HepG2 (cell line): ENCODE measurements at regions of chr7 and their contacts with region 1.

Region 1: DNA sequence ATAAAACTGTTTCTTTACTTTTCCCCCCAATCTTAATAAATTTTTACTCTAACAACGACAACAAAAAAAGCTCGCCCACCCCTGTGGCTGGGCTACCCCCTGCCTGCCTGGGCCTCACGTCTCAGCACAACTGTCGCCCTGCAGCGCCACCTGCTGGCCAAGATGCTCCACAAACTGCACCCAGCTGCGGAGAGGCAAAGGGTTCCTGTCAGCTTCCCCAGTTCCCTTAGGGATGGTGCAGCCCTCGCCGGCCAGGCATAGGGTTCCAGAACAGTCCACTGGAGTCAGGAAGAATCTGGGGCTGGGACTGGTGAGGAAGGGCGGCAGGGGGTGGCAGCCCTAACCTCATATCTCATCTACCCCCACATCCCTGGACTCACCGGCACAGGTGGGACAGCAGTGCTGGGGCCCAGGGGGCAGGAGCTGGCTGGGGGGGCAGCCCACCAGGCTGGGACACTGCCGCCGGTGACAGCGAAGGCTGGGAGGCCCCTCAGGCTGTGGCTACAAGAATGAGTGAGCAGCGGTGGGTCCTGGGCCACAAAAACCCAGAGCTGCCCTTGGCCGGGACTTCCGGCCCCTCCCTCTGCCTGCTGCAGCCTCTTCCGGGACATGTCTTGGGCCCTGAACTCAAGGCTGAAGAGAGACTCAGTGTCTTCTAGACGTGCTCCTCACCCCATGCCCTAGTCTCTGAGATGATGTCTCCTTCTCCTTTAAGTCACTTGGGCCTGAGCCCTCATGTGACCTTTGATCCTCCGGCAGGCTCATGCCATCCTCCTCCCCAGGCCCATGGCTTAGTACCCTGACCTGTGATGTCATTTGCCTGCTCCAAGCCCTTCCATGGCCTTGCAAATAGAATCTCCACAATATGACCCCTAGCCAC is 21.2 kb downstream of the ATP6V1F start:
- DNase-seq: peak; percentile 44
- ATAC-seq: peak; percentile 49
- H3K4me3 ChIP-seq: peak overlapping the region; percentile 70 to 79 (median 70)
- H3K27ac ChIP-seq: peak overlapping the region; percentile 21
- H3K4me1 ChIP-seq: peaks cover 39% of the 10 kb centered on the region
- H3K27me3 ChIP-seq: peaks cover 0 to 10% of the 10 kb centered on the region in 2 experiments; a peak in 2 of 5 replicates
- CTCF ChIP-seq: peak; percentile 96
- EP300 ChIP-seq: no peak
- POLR2A ChIP-seq: no peak
- RAD21 ChIP-seq: peak; percentile 65

Region 2: GRCh38 chr7:128791121-128791961 is 92.5 kb before region 1 on chr7:
- CTCF ChIA-PET with region 1: no interaction called
- POLR2A ChIA-PET with region 1: no interaction called
- in situ Hi-C with region 1: loop called (anchors 5 kb)
- intact Hi-C with region 1: loop called (anchors 2 kb)
- DNase-seq: no peak
- ATAC-seq: peak; percentile 82
- H3K4me3 ChIP-seq: peak overlapping the region; percentile 59 to 79 (median 65)
- H3K27ac ChIP-seq: no peak overlapping the region
- H3K4me1 ChIP-seq: peaks cover 17% of the 10 kb centered on the region
- H3K27me3 ChIP-seq: peaks cover 7 to 32% of the 10 kb centered on the region in 2 experiments; a peak in 4 of 5 replicates
- CTCF ChIP-seq: no peak
- EP300 ChIP-seq: no peak
- POLR2A ChIP-seq: no peak
- RAD21 ChIP-seq: no peak

Region 3: GRCh38 chr7:128821724-128822123 is 62.1 kb before region 1 on chr7:
- CTCF ChIA-PET with region 1: no interaction called
- POLR2A ChIA-PET with region 1: no interaction called
- in situ Hi-C with region 1: no loop called
- intact Hi-C with region 1: no loop called
- DNase-seq: no peak
- ATAC-seq: peak; percentile 30; the same call in 1 of the 3 replicates
- H3K4me3 ChIP-seq: no peak overlapping the region
- H3K27ac ChIP-seq: no peak overlapping the region
- H3K4me1 ChIP-seq: peaks cover 3% of the 10 kb centered on the region
- H3K27me3 ChIP-seq: peaks cover 2 to 41% of the 10 kb centered on the region in 2 experiments; a peak in 4 of 5 replicates
- CTCF ChIP-seq: no peak
- EP300 ChIP-seq: no peak
- POLR2A ChIP-seq: no peak
- RAD21 ChIP-seq: no peak

Region 4: DNA sequence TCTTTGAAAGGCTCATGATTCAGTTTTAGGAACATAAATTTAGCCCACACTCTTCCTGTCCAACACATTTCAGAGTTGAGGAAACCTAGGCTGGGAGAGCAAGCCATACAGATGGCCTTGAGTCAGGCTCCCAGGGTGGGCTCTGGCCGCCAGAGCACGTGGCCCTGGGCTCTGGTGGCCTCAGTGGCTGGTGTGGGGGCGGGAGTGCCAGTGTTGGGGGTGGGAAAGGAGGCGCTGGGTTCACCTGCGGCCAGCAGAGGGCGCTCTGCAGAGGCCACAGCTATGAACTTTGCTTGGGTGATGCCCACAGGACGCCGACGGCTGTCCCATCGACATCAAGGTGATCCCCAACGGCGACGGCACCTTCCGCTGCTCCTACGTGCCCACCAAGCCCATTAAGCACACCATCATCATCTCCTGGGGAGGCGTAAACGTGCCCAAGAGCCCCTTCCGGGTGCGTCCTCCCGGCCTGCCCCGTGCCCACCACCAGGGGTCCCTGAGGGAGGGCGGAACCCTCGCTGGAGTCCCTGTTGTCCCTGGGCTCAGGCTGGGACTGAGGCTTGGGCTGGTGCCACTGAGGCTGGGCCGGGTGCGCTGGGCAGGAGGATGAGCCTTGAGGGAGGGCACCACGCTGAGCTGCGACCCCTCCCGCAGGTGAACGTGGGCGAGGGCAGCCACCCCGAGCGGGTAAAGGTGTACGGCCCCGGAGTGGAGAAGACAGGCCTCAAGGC is 41.8 kb before region 1 on chr7:
- CTCF ChIA-PET with region 1: interaction called, 13 read pairs
- POLR2A ChIA-PET with region 1: no interaction called
- in situ Hi-C with region 1: no loop called
- intact Hi-C with region 1: no loop called
- DNase-seq: no peak
- ATAC-seq: peak; percentile 64
- H3K4me3 ChIP-seq: no peak overlapping the region; a peak in 1 of 6 replicates
- H3K27ac ChIP-seq: no peak overlapping the region
- H3K4me1 ChIP-seq: peaks cover 11% of the 10 kb centered on the region
- H3K27me3 ChIP-seq: peaks cover 5 to 15% of the 10 kb centered on the region in 2 experiments; a peak in 2 of 5 replicates
- CTCF ChIP-seq: peak; percentile 68
- EP300 ChIP-seq: no peak
- POLR2A ChIP-seq: no peak
- RAD21 ChIP-seq: 0 out of 2 replicates have a peak, but pooled peaks have one; percentile 40

Region 5: GRCh38 chr7:128862571-128863432 is 21.1 kb before region 1 on chr7 and contains the start of gene ATP6V1F:
- CTCF ChIA-PET with region 1: no interaction called
- POLR2A ChIA-PET with region 1: interaction called, 12 read pairs
- in situ Hi-C with region 1: no loop called
- intact Hi-C with region 1: loop called (anchors 1 kb)
- DNase-seq: peak; percentile 93
- ATAC-seq: peak; percentile 89
- H3K4me3 ChIP-seq: peak within 1 kb of the TSS; percentile 72 to 91 (median 81)
- H3K27ac ChIP-seq: peak within 1 kb of the TSS; percentile 39
- H3K4me1 ChIP-seq: peaks cover 22% of the 10 kb centered on the region
- H3K27me3 ChIP-seq: peaks cover 0 to 10% of the 10 kb centered on the region in 2 experiments; a peak in 4 of 5 replicates
- CTCF ChIP-seq: no peak
- EP300 ChIP-seq: no peak
- POLR2A ChIP-seq: peak; percentile 53 to 82
- RAD21 ChIP-seq: no peak
- total RNA-seq, gene ATP6V1F: 87.2 and 107 TPM in 2 replicates